Caco-2 (cell line): ENCODE measurements at regions of chr3 and their contacts with region 1.

Region 1: GRCh38 chr3:134212906-134213665 is 37.6 kb downstream of the RYK start:
- DNase-seq: peak; percentile 82 to 92
- H3K4me3 ChIP-seq: no peak overlapping the region
- H3K4me3 Mint-ChIP-seq: no peak overlapping the region
- H3K27ac Mint-ChIP-seq: no peak overlapping the region
- H3K4me1 ChIP-seq: no peaks in the 10 kb centered on the region
- H3K4me1 Mint-ChIP-seq: peaks cover 20% of the 10 kb centered on the region
- H3K27me3 ChIP-seq: no peaks in the 10 kb centered on the region
- H3K27me3 Mint-ChIP-seq: no peaks in the 10 kb centered on the region
- CTCF ChIP-seq: peak; percentile 93 to 94

Region 2: DNA sequence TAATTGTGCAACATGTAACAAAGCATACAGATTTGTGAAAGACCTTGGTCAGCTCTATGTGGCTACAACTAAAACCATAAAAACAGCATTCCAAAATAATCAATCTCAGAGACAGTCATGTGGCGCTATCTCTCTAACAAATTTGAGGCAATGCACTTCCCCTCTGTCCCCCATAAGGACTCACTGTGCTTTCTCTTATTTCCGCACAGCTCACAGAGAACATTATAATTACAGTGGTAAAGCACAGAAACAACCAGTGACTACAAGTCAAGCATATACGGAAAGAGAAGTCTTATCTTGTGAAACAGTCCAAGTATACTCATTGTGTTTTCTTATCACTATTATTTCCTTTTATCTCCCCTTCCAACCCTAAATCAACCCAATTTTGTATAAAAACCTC is 26.7 kb before region 1 on chr3:
- CTCF ChIA-PET with region 1: no interaction called
- POLR2A ChIA-PET with region 1: no interaction called
- intact Hi-C with region 1: no loop called
- DNase-seq: no peak
- H3K4me3 ChIP-seq: no peak overlapping the region
- H3K4me3 Mint-ChIP-seq: no peak overlapping the region
- H3K27ac Mint-ChIP-seq: no peak overlapping the region
- H3K4me1 ChIP-seq: no peaks in the 10 kb centered on the region
- H3K4me1 Mint-ChIP-seq: peaks cover 17% of the 10 kb centered on the region
- H3K27me3 ChIP-seq: no peaks in the 10 kb centered on the region
- H3K27me3 Mint-ChIP-seq: no peaks in the 10 kb centered on the region
- CTCF ChIP-seq: no peak

Region 3: DNA sequence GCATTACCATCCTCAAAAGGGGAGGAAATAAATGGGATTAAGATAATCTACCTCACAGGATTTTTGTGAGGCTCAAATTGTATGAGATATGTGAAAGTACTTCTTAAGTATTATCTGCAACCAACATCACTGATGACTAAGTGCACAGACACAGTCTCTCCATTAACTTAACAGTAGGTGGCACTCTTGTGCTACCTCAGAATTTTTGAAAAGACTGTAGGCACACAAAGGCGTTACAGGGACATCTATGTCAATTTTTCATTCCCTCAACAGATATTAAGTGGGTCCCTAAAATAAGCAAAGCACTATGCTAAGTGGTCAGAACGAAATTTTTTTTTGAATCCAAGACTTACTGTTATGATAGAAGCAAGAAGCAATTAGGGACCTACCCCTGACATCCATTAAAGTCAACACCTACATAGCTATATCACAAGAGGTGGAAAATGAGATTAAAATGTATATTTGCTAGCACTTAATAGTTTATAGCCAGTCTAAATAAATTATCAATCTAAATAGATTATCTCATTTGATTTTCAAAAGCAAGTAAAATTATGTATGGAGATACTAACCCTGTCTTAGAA is 15.3 kb before region 1 on chr3:
- CTCF ChIA-PET with region 1: interaction called, 19 read pairs
- POLR2A ChIA-PET with region 1: no interaction called
- intact Hi-C with region 1: loop called (anchors 2 kb)
- DNase-seq: peak in 1 of 2 experiments; percentile 47
- H3K4me3 ChIP-seq: no peak overlapping the region
- H3K4me3 Mint-ChIP-seq: no peak overlapping the region
- H3K27ac Mint-ChIP-seq: no peak overlapping the region
- H3K4me1 ChIP-seq: no peaks in the 10 kb centered on the region
- H3K4me1 Mint-ChIP-seq: no peaks in the 10 kb centered on the region
- H3K27me3 ChIP-seq: no peaks in the 10 kb centered on the region
- H3K27me3 Mint-ChIP-seq: no peaks in the 10 kb centered on the region
- CTCF ChIP-seq: peak; percentile 70 to 71

Region 4: DNA sequence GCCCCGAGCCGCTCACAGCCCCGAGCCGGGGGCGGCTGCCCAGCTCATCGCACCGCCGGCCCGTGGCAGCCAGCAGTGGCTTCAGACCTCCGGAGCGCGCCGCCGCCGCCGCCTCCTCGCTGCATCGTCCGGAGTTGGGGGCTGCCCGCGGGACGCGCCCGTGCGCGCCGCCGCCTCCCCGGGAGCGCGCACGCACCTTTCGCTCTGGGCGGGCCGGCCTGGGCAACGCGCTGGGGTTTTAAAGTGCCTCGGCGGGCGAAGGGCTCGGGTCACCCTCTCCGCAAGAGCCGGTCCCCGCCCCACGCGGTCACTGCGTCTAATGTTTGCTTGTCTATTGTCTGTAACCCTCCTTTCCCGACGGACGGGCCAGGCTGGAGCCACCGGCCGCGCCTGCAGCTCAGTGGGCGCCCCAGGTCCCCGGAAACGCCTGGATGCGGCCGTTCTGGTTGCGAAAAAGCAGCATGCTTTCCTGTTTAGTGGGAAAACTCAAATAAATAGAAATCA is 37.7 kb after region 1 on chr3 and contains the start of gene RYK:
- CTCF ChIA-PET with region 1: interaction called, 5 read pairs
- POLR2A ChIA-PET with region 1: no interaction called
- intact Hi-C with region 1: loop called (anchors 1 kb)
- DNase-seq: peak; percentile 93 to 95
- H3K4me3 ChIP-seq: peak within 1 kb of the TSS; percentile 88
- H3K4me3 Mint-ChIP-seq: peak within 1 kb of the TSS; percentile 85
- H3K27ac Mint-ChIP-seq: peak within 1 kb of the TSS; percentile 86
- H3K4me1 ChIP-seq: peaks cover 36% of the 10 kb centered on the region
- H3K4me1 Mint-ChIP-seq: peaks cover 37% of the 10 kb centered on the region
- H3K27me3 ChIP-seq: no peaks in the 10 kb centered on the region
- H3K27me3 Mint-ChIP-seq: no peaks in the 10 kb centered on the region
- CTCF ChIP-seq: no peak
- total RNA-seq, gene RYK: 101 and 102 TPM in 2 replicates

Region 5: DNA sequence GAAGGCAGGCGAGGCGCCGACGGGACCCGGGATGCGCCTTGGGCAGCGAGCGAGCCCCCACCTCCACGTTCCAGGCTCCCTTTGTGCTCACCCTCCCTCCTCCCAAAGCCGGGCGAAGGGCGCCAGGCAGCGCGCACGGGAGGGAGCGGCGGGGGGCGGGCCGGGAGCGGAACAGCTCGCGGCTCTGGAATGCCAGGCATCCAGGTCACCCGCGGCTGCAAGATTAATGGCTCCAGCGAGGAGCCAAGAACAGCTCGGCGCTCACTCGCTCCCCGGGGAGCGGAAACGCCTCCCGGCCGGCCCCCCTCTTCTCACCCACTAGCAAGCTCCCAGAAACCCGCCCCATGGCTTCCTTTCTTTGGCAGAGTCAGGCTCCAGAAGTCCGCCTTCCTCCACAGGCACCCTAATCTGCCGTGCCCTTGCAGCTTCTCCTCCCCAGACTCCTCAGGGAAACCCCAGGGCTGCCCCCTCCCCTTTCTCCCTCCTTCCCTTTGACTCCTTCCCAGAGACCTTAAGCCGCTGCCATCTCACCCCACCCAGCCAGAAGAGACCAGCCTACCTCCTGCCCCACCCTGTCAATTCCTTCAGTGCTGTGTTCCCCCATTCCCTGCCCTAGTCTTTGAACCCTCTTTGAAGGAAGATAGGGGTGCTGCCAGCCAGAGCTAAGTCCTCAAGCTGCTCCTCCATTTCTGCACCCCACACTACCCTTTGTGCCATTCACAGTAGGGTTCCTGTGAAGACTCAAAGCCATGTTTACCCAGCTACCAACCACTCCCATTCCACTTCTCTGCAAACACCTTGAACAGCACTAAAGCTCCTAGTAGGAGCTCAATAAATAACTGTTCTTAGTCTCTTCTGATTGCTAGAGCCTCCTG is 151.2 kb after region 1 on chr3:
- CTCF ChIA-PET with region 1: interaction called, 4 read pairs
- POLR2A ChIA-PET with region 1: no interaction called
- intact Hi-C with region 1: loop called (anchors 2 kb)
- DNase-seq: peak; percentile 95 to 97
- H3K4me3 ChIP-seq: 0 out of 2 replicates have a peak overlapping the region, but pooled peaks have one; percentile 6
- H3K4me3 Mint-ChIP-seq: peak overlapping the region; percentile 70
- H3K27ac Mint-ChIP-seq: peak overlapping the region; percentile 82
- H3K4me1 ChIP-seq: peaks cover 95% of the 10 kb centered on the region
- H3K4me1 Mint-ChIP-seq: peaks cover 42% of the 10 kb centered on the region
- H3K27me3 ChIP-seq: no peaks in the 10 kb centered on the region
- H3K27me3 Mint-ChIP-seq: no peaks in the 10 kb centered on the region
- CTCF ChIP-seq: no peak

Region 6: DNA sequence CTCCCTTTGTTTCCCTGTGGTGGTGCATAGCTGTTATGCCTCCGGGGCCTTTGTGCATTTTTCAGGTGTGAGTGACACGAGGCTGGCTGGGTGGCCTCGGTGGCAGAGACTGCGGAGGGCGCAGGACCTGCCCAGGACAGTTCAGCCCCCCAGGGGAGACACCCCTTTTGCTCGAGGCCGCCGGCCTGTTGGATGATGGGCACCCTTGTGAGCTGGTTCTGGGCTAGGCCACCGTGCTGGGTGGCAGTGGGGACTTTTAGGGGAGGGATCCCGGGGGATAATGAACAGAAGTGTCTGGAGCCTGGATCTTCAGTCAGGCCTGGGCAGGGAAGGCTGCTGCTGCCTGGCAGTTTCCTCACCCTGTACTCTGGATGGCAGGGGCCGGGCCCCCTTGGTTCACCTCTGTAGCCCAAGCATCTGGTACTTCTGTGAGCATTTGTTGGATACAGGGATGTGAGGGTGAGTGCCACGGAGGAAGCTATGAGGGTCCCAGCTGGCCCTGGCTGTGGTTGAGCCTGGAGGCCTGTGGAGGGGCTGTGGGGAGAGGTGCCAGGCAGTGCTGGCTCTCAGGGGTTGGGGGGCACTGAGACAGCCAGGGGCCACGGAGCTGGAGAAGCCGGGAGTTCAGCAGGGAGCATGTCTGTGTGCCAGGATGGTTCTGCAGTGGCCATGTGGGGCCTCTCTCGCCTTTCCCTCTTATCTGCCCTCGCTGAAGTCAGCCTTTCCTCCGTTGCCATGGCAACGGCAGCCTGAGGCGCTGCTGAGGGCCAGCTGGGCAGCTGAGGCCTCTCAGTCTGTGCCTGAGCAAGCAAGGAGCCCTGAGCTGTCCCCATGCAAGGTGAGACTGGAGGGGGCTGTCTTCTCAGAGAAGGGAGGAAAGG is 388.7 kb after region 1 on chr3:
- CTCF ChIA-PET with region 1: no interaction called
- POLR2A ChIA-PET with region 1: no interaction called
- intact Hi-C with region 1: no loop called
- DNase-seq: peak; percentile 56 to 62
- H3K4me3 ChIP-seq: no peak overlapping the region
- H3K4me3 Mint-ChIP-seq: no peak overlapping the region
- H3K27ac Mint-ChIP-seq: no peak overlapping the region
- H3K4me1 ChIP-seq: no peaks in the 10 kb centered on the region
- H3K4me1 Mint-ChIP-seq: no peaks in the 10 kb centered on the region
- H3K27me3 ChIP-seq: no peaks in the 10 kb centered on the region
- H3K27me3 Mint-ChIP-seq: peaks cover 14% of the 10 kb centered on the region
- CTCF ChIP-seq: no peak